Panc1 (cell line): ENCODE measurements at regions of chr13 and their contacts with region 1.

Region 1: DNA sequence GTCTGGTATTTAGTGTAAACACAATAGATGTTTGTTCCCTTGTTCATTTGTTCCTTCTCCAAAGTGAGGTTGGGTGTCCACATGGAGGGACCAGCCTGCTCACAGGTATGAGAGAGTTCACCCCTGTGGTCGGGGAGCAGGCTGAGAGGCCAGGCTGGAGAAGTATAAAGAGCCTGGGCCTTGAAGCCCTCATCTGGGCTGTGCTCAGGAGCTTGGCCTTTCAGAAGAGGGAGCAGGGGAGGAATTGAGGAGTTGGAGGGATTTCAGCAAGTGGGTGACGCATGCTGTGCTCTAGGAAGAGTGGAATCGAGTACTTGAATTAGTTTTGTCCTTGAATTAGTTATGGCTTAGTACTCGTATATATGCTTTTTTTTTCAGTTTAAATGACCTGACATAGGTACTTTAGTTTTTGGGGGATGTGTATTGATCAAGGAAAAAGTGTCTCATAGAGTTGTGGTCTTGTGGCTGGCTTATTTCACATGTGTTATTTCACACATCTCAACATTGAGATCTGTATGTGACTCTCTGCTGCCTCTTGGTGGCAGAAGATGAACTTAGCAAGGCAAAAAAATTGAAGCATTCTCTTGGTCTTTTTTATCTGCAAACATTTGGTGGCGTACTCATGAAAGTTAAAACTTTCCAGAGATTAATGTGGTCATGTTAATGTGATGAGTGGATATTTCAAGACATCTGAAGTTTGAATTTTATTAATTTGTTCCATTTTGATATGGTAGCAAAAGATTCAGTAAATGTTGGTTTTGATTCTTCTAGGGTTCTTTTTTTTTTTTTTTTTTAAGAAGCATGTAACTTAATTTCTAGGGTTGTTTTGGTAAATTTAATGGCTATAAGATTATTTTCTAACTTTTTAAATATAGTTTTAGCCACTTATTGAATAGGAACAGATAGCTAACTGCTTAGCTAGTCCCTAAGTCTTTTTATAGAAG is 54.3 kb downstream of the SLAIN1 start:
- DNase-seq: peak; percentile 22
- ATAC-seq: no peak; the same call in 1 of the 2 replicates
- H3K4me3 ChIP-seq: no peak overlapping the region
- H3K27ac ChIP-seq: no peak overlapping the region
- H3K4me1 ChIP-seq: no peaks in the 10 kb centered on the region
- H3K27me3 ChIP-seq: no peaks in the 10 kb centered on the region
- CTCF ChIP-seq: peak; percentile 74

Region 2: DNA sequence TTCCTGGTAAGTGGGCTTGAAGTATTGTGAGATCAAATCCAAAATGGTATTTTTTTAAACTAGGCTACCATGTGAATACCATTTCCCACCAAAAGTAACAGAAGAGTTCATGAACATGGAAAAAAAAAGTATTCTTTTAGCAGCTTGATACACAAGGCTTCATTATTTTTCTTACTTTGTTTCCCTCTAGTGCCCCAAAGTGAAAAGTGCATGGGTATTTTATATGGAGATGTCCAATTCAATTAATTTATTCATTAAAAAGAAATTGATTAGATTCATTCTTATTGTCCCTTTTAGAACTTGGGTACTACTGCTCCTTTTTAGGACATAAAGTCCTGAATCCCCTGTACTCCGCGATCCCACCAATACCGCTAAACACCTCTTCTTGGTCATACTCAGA is 244.9 kb before region 1 on chr13:
- CTCF ChIA-PET with region 1: no interaction called
- POLR2A ChIA-PET with region 1: no interaction called
- in situ Hi-C with region 1: no loop called
- intact Hi-C with region 1: loop called (anchors 10 kb)
- DNase-seq: no peak
- ATAC-seq: no peak
- H3K4me3 ChIP-seq: no peak overlapping the region
- H3K27ac ChIP-seq: no peak overlapping the region
- H3K4me1 ChIP-seq: no peaks in the 10 kb centered on the region
- H3K27me3 ChIP-seq: no peaks in the 10 kb centered on the region
- CTCF ChIP-seq: peak; percentile 30; the same call in 1 of the 2 replicates

Region 3: GRCh38 chr13:77595166-77595810 is 156.5 kb before region 1 on chr13:
- CTCF ChIA-PET with region 1: interaction called, 4 read pairs
- POLR2A ChIA-PET with region 1: no interaction called
- in situ Hi-C with region 1: no loop called
- intact Hi-C with region 1: loop called (anchors 2 kb)
- DNase-seq: no peak
- ATAC-seq: no peak
- H3K4me3 ChIP-seq: no peak overlapping the region
- H3K27ac ChIP-seq: no peak overlapping the region
- H3K4me1 ChIP-seq: no peaks in the 10 kb centered on the region
- H3K27me3 ChIP-seq: no peaks in the 10 kb centered on the region
- CTCF ChIP-seq: no peak

Region 4: DNA sequence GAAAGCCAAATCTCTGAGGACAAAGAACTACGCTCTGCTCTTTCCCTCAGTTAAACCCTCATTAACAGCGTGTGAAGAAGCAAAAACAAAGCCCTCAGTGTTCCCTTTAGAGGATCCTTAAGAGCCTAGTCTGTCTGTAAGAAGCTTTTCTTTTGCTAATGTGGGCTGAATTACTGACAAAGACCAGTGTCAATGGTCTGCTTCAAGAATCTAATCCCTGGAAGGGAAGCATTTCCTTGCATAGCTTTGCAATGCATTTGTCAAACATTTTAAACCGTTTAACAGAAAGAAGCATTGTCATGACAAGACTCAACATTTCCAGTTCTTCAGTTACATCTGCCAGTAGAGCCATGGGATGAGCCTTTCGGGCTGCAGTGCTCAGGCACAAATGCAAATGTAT is 101.9 kb after region 1 on chr13:
- CTCF ChIA-PET with region 1: no interaction called
- POLR2A ChIA-PET with region 1: no interaction called
- in situ Hi-C with region 1: no loop called
- intact Hi-C with region 1: no loop called
- DNase-seq: no peak
- ATAC-seq: no peak
- H3K4me3 ChIP-seq: no peak overlapping the region
- H3K27ac ChIP-seq: no peak overlapping the region
- H3K4me1 ChIP-seq: no peaks in the 10 kb centered on the region
- H3K27me3 ChIP-seq: no peaks in the 10 kb centered on the region
- CTCF ChIP-seq: no peak